MCF 10A (cell line): ENCODE measurements at regions of chr16 and their contacts with region 1.

Region 1: DNA sequence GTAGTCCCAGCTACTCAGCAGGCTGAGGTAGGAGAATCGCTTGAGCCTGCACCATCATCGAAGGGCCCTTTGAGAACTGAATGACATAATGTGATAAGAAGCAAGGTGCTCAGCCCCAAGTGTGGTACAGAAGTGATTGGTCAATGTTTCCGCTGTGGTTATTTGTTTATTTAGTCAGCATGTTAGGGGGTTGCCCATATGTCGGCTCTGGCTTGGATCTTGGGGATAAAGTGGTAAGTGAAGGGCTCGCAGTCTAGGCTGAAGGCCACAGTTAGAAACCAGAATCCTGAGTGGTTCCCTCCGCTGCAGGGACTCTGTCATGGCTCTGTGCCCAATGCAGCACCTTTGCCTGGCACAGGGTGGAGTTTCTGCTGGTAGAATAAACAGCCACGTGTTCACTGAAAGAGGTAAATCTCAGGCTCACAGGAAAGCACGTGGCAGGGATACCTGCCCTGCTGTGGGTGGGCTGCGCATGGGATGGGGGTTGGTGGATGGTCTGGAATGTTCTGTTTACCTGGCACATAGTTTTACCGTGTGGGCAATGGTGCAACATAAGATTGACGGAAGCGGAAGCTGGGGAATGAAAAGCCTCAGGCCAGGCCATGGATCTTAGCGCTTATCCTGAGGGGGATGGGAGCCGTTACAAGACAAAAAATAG is 35.5 kb downstream of the SYT17 start:
- DNase-seq: no peak
- H3K4me3 Mint-ChIP-seq: no peak overlapping the region
- H3K27ac Mint-ChIP-seq: no peak overlapping the region
- H3K4me1 Mint-ChIP-seq: no peaks in the 10 kb centered on the region
- H3K27me3 Mint-ChIP-seq: no peaks in the 10 kb centered on the region
- CTCF ChIP-seq: no peak

Region 2: GRCh38 chr16:19142939-19143598 is 60.4 kb before region 1 on chr16:
- CTCF ChIA-PET with region 1: no interaction called
- POLR2A ChIA-PET with region 1: no interaction called
- intact Hi-C with region 1: no loop called
- DNase-seq: peak; percentile 48
- H3K4me3 Mint-ChIP-seq: no peak overlapping the region
- H3K27ac Mint-ChIP-seq: no peak overlapping the region
- H3K4me1 Mint-ChIP-seq: peaks cover 37% of the 10 kb centered on the region
- H3K27me3 Mint-ChIP-seq: no peaks in the 10 kb centered on the region
- CTCF ChIP-seq: no peak

Region 3: DNA sequence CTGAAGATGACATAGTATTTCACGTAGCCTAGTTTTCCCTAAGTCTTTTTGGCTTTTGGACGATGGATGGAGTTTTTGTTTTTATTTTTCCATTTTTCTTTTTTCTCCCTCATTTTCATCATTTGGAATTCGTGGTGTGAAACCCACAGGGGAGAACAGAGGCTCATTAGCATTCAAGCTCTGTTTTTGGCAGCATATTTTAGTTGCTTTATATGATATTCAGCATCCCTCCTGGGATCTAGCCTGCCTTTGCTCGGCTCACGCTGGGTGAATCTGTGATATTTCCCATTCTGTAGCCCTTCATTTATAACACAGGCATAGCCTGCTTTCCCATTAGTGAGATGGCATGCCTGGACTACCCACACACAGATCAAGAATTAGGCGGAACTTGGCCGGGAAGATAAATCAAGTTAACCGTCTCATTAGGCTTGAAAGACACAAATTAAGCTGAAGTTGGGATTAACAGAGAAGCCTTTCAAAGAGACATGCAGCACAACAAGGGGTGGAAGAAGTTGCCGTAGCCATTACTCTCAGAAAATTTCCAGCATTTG is 62.0 kb after region 1 on chr16:
- CTCF ChIA-PET with region 1: no interaction called
- POLR2A ChIA-PET with region 1: no interaction called
- intact Hi-C with region 1: loop called (anchors 10 kb)
- DNase-seq: no peak
- H3K4me3 Mint-ChIP-seq: no peak overlapping the region
- H3K27ac Mint-ChIP-seq: no peak overlapping the region
- H3K4me1 Mint-ChIP-seq: no peaks in the 10 kb centered on the region
- H3K27me3 Mint-ChIP-seq: peaks cover under 1% of the 10 kb centered on the region
- CTCF ChIP-seq: no peak